ENCODE measurements at regions of chr10 and their contacts with region 1.

Region 1: GRCh38 chr10:89793649-89794254 is 92.4 kb downstream of the KIF20B start:
- DNase-seq: peak; percentile 39 to 65 (median 50)
- ATAC-seq: peak; percentile 90
- H3K4me3 ChIP-seq: no peak overlapping the region
- H3K27ac ChIP-seq: no peak overlapping the region
- H3K4me1 ChIP-seq: no peaks in the 10 kb centered on the region; a peak in 2 of 5 replicates
- H3K27me3 ChIP-seq: no peaks in the 10 kb centered on the region
- CTCF ChIP-seq: peak; percentile 57 to 70 (median 57)
- EP300 ChIP-seq: no peak
- POLR2A ChIP-seq: no peak
- RAD21 ChIP-seq: peak; percentile 79 to 85

Region 2: DNA sequence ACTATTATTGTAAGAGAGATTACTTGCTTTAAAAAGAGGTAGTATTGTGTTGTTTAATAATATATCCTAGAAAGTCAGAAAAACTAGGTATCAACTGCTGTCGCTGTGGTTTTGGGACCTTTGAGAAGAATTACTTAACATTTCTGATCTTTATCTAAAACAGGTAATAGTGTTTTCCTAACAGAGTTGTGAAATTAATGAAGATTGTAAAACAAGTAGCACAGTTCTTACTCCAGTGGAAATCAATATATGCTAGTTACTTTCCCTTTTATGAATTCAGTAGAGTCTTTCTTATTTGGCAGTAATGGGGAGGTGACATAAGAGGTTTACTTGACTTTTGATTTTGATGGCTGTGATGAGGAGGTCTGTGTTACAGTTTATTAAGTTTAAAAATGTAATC is 34.2 kb before region 1 on chr10:
- CTCF ChIA-PET with region 1: no interaction called
- POLR2A ChIA-PET with region 1: no interaction called
- in situ Hi-C with region 1: no loop called
- intact Hi-C with region 1: no loop called
- DNase-seq: no peak
- ATAC-seq: no peak
- H3K4me3 ChIP-seq: no peak overlapping the region
- H3K27ac ChIP-seq: no peak overlapping the region
- H3K4me1 ChIP-seq: no peaks in the 10 kb centered on the region
- H3K27me3 ChIP-seq: no peaks in the 10 kb centered on the region
- CTCF ChIP-seq: no peak
- EP300 ChIP-seq: no peak
- POLR2A ChIP-seq: no peak
- RAD21 ChIP-seq: no peak

Region 3: GRCh38 chr10:89773081-89773480 is 20.7 kb before region 1 on chr10:
- CTCF ChIA-PET with region 1: no interaction called
- POLR2A ChIA-PET with region 1: no interaction called
- in situ Hi-C with region 1: no loop called
- intact Hi-C with region 1: no loop called
- DNase-seq: no peak
- ATAC-seq: no peak
- H3K4me3 ChIP-seq: no peak overlapping the region
- H3K27ac ChIP-seq: no peak overlapping the region
- H3K4me1 ChIP-seq: no peaks in the 10 kb centered on the region
- H3K27me3 ChIP-seq: no peaks in the 10 kb centered on the region
- CTCF ChIP-seq: no peak
- EP300 ChIP-seq: no peak
- POLR2A ChIP-seq: no peak
- RAD21 ChIP-seq: no peak

Region 4: GRCh38 chr10:89853781-89854191 is 60.0 kb after region 1 on chr10:
- CTCF ChIA-PET with region 1: interaction called, 3 read pairs
- POLR2A ChIA-PET with region 1: no interaction called
- in situ Hi-C with region 1: no loop called
- intact Hi-C with region 1: loop called (anchors 5 kb)
- DNase-seq: peak; percentile 23 to 32 (median 25)
- ATAC-seq: peak; percentile 96
- H3K4me3 ChIP-seq: no peak overlapping the region
- H3K27ac ChIP-seq: no peak overlapping the region
- H3K4me1 ChIP-seq: no peaks in the 10 kb centered on the region; a peak in 1 of 5 replicates
- H3K27me3 ChIP-seq: no peaks in the 10 kb centered on the region
- CTCF ChIP-seq: peak in 2 of 3 experiments; percentile 51 to 54; a peak in 4 of 6 replicates
- EP300 ChIP-seq: no peak
- POLR2A ChIP-seq: no peak
- RAD21 ChIP-seq: no peak; a peak in 1 of 4 replicates

Region 5: DNA sequence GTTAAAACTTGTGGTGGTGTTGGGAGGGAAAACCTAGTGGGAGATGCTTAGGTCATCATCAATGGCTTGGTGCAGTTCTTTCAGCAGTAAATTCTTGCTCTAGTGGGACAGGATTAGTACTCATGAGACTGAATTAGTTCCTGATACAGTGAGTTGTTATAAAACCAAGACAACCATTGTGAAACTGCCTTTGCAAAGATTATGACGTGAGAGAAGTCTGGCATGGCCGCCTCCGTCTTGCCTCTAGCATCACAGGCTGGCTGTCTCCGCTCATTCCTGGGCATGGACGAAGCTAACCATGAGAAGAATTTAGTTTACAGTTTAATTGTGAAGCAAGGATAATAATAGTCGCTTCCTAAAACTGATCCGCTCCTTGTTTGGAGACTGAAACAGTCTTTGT is 94.1 kb after region 1 on chr10:
- CTCF ChIA-PET with region 1: no interaction called
- POLR2A ChIA-PET with region 1: no interaction called
- in situ Hi-C with region 1: no loop called
- intact Hi-C with region 1: no loop called
- DNase-seq: no peak
- ATAC-seq: no peak
- H3K4me3 ChIP-seq: no peak overlapping the region
- H3K27ac ChIP-seq: no peak overlapping the region
- H3K4me1 ChIP-seq: no peaks in the 10 kb centered on the region
- H3K27me3 ChIP-seq: no peaks in the 10 kb centered on the region
- CTCF ChIP-seq: no peak
- EP300 ChIP-seq: no peak
- POLR2A ChIP-seq: no peak
- RAD21 ChIP-seq: no peak

Region 6: DNA sequence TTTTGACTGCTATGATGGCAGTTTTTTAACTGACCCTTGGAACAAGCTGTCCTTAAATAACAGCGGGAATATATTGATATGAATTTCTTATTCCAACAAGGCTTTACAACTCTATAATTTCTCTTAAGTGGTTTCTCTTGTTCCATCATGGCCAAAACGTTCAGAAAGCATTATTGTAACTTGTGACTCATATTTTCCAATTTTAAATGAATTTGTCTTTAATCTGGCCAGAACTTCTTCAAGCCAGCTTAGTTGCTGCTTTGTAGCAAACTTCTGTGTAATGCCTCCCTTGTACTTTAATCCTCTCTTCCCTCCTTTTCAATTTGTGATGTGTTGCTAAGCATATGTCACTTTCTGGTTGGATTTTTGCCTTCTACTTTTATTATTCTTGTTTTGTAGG is 179.6 kb after region 1 on chr10:
- CTCF ChIA-PET with region 1: no interaction called
- POLR2A ChIA-PET with region 1: no interaction called
- in situ Hi-C with region 1: no loop called
- intact Hi-C with region 1: no loop called
- DNase-seq: no peak
- ATAC-seq: no peak
- H3K4me3 ChIP-seq: no peak overlapping the region
- H3K27ac ChIP-seq: no peak overlapping the region
- H3K4me1 ChIP-seq: no peaks in the 10 kb centered on the region
- H3K27me3 ChIP-seq: no peaks in the 10 kb centered on the region
- CTCF ChIP-seq: no peak
- EP300 ChIP-seq: no peak
- POLR2A ChIP-seq: no peak
- RAD21 ChIP-seq: no peak

Region 7: DNA sequence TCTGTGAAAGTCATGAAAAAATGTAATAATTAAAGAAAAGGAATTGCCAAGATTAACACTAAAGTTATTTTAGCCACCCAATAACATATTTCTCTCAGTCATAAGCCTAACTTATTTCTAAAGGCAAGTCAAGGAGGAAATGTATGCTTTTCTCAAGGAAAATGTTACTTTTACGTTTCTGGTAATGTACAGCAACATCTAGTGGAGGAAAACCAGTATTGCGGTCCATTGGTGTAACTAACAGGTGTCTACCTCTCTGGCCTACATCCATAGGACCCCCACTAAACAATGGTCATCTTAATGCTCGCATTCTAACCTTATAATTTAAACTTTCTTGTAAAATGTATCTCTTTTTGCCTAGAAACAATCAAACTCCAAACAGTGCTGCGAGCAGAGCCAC is 345.1 kb after region 1 on chr10:
- CTCF ChIA-PET with region 1: no interaction called
- POLR2A ChIA-PET with region 1: no interaction called
- in situ Hi-C with region 1: no loop called
- intact Hi-C with region 1: loop called (anchors 10 kb)
- DNase-seq: peak in 1 of 4 experiments; percentile 4
- ATAC-seq: no peak
- H3K4me3 ChIP-seq: no peak overlapping the region
- H3K27ac ChIP-seq: no peak overlapping the region
- H3K4me1 ChIP-seq: no peaks in the 10 kb centered on the region
- H3K27me3 ChIP-seq: no peaks in the 10 kb centered on the region
- CTCF ChIP-seq: no peak
- EP300 ChIP-seq: no peak
- POLR2A ChIP-seq: no peak
- RAD21 ChIP-seq: 0 out of 4 replicates have a peak, but pooled peaks of 1 of the 2 experiments have one; percentile 4

Region 8: GRCh38 chr10:90741926-90742565 is 948.3 kb after region 1 on chr10:
- CTCF ChIA-PET with region 1: no interaction called
- POLR2A ChIA-PET with region 1: no interaction called
- in situ Hi-C with region 1: no loop called
- intact Hi-C with region 1: loop called (anchors 10 kb)
- DNase-seq: no peak
- ATAC-seq: no peak
- H3K4me3 ChIP-seq: no peak overlapping the region
- H3K27ac ChIP-seq: no peak overlapping the region
- H3K4me1 ChIP-seq: no peaks in the 10 kb centered on the region
- H3K27me3 ChIP-seq: no peaks in the 10 kb centered on the region
- CTCF ChIP-seq: no peak
- EP300 ChIP-seq: no peak
- POLR2A ChIP-seq: no peak
- RAD21 ChIP-seq: no peak

Region 9: DNA sequence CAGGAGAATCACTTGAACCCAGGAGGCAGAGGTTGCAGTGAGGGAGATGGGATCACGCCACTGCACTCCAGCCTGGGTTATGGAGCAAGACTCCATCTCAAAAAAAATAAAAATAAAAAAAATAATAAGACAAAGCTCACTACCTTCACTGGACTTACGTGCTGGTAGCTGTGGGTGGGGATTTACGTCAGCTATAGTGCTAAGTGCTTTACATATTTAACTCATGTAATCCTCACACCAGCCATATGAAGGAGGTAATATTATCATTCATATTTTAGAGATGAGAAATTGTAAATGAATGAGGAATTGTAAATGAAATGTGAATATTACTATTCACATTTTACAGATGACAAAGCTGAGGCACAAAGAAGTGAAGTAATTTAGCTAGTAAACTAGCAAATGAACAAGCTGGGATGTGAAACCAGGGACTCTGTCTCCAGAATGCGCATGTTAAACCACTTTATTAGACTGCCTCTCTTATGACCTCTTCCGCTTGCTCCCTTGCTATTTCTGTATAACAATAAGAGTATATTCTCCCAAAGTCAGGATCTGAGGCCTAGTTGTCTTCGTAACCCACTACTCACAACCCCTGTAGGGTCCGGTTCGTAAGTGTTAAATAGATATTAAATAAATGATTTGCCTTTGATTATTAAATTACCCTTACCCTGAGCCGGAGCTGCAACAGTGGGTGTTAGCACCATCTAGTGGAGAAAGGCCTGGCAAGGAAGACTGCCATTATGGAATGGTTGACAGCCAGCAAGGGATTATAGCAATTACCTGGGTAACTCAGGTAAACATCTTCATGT is 993.8 kb after region 1 on chr10:
- CTCF ChIA-PET with region 1: interaction called, 7 read pairs
- POLR2A ChIA-PET with region 1: no interaction called
- in situ Hi-C with region 1: no loop called
- intact Hi-C with region 1: loop called (anchors 1 kb)
- DNase-seq: peak; percentile 8 to 28 (median 14)
- ATAC-seq: peak; percentile 79
- H3K4me3 ChIP-seq: no peak overlapping the region
- H3K27ac ChIP-seq: no peak overlapping the region
- H3K4me1 ChIP-seq: no peaks in the 10 kb centered on the region
- H3K27me3 ChIP-seq: peaks cover 0 to 4% of the 10 kb centered on the region in 2 experiments; a peak in 1 of 5 replicates
- CTCF ChIP-seq: peak; percentile 56 to 62 (median 57)
- EP300 ChIP-seq: no peak
- POLR2A ChIP-seq: no peak
- RAD21 ChIP-seq: peak; percentile 35 to 56